ENCODE measurements at regions of chr11 and their contacts with region 1.

Region 1: DNA sequence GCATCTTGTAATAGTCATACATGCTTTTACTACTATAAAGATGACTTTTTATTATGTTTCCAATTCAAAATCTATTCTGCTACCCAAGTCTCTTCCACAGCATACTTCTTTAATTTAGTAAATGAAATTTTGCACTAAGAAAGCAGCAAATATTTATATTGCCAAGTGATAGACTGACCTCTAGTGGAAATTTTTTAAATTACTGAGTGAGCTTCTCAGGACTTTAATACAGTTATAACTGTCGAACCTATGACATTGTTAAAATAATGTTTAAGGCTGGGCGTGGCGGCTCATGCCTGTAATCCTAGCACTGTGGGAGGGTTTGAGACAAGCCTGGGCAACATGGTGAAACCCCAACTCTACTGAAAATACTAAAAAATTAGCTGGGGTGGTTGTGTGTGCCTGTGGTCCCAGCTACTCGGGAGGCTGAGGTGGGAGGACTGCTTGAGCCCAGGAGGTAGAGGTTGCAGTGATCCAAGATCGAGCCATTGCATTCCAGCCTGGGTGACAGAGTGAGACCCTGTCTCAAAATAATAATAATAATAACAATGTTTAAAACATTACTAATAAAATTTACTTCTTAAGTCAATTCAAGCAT is 27.3 kb downstream of the STK33 start:
- DNase-seq: no peak
- H3K4me3 ChIP-seq: no peak overlapping the region
- H3K27ac ChIP-seq: no peak overlapping the region
- H3K4me1 ChIP-seq: no peaks in the 10 kb centered on the region
- H3K27me3 ChIP-seq: peaks cover 0 to 10% of the 10 kb centered on the region in 2 donors
- CTCF ChIP-seq: peak; percentile 60 to 74

Region 2: GRCh38 chr11:8192016-8192895 is 374.5 kb before region 1 on chr11:
- intact Hi-C with region 1: loop called (anchors 10 kb)
- DNase-seq: peak in 1 of 2 donors; percentile 65
- H3K4me3 ChIP-seq: no peak overlapping the region
- H3K27ac ChIP-seq: no peak overlapping the region
- H3K4me1 ChIP-seq: no peaks in the 10 kb centered on the region
- H3K27me3 ChIP-seq: peaks cover 0 to 27% of the 10 kb centered on the region in 2 donors
- CTCF ChIP-seq: peak; percentile 62 to 75

Region 3: DNA sequence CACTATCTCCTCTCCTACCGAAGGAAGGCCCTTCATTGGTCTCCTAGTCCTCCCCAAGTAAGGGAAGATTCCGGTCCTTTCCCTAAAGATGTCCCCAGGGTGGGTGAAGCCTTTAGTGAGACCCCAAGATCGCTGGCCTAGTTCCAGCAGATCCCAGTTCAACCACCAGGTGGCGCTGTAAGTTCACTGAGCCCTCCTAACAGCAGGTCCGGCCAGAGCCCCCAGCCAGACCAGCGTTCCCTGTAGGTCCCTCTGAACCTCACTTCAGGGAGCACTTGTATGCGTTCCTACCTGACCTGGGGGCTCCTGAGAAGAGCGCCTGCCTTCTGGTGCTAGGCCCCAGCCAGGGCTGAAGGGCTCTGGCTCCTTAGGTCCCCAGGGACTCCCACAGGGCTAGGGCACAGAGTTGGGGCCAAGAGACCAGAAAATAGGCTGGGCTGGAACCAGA is 341.1 kb before region 1 on chr11:
- intact Hi-C with region 1: loop called (anchors 2 kb)
- DNase-seq: peak; percentile 66 to 79
- H3K4me3 ChIP-seq: no peak overlapping the region
- H3K27ac ChIP-seq: no peak overlapping the region
- H3K4me1 ChIP-seq: peaks cover 0 to 8% (median 2%) of the 10 kb centered on the region in 4 donors
- H3K27me3 ChIP-seq: peaks cover 0 to 11% of the 10 kb centered on the region in 2 donors
- CTCF ChIP-seq: peak; percentile 91 to 93

Measured in tibial artery (tissue), 4 donors.